Posterior vena cava (tissue), 2 donors: ENCODE measurements at regions of chr4 and their contacts with region 1.

Region 1: GRCh38 chr4:972651-973424 is 531 bp downstream of the DGKQ start:
- DNase-seq: no peak

Region 2: DNA sequence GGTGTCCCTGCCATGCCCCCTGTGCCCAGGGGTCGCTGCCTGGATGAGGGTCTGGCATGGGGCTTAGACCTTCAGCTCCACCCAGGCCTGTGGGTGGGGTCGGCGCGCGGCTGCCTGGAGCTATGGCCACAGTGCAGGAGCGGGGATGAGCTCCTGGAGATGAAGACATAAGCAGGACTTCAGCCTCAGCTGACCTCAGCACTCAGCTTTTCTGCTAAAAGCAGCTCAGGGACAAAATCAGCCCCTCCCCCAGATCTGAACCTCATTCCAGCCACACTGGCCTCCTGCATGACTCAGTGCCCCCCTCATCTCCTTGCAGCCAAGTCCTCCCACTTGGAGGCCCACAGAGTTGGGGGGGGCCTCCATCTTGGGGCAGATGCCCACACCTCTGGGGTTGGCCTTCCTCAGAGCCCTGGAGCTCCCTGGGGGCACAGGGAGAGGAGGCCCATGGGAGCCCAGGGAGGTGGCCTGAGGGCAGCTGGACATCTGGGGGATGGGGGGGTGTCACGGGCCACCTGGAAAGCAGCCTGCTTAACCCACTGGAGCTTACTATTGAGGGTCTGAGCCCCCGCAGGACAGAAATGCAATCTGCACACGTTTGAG is 127.5 kb before region 1 on chr4:
- intact Hi-C with region 1: no loop called
- DNase-seq: no peak

Region 3: DNA sequence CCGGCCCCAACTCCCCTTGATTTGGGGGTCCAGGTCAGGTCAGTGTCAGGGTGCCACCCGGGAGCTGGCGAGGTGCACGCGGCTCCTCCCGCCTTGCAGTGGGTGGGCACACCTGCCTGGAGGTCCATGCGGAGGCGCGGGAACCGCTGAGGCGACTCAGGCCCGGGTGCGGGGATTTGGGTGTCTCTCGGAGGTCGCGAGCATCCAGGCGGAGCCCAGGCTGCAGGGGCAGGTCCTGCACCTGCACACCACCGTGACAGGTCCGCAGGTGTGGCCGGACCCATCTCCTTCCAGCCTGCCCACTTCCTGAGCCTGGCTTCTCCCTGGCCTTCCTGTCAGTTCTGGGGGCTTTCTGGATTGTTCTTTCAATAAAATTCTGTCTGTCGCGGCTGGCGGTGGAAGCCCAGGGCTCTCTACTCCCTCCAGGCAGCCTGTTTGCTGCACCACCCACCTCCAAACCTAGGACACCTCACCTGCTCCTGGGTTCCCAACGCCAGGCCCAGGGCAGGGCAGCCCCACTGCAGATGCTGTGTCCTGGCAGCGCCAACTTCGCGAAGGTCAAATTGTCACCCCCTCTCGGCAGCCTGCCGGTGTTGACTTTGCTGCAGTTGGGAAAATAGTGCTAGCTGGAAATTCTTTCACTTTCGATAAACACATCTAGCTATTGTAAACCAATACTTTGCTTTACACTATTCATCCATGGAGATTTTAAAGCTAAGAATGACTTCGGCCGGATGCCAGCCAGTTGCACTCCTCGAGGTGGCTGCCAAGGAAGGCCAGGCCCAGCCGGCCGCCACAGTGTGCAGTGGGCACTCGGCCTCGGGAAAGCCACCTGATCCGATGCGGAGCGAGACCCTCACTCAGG is 74.5 kb after region 1 on chr4:
- intact Hi-C with region 1: loop called in 1 of 2 experiments (anchors 1 kb)
- DNase-seq: peak; percentile 79